ENCODE measurements at regions of chr18 and their contacts with region 1.

Region 1: DNA sequence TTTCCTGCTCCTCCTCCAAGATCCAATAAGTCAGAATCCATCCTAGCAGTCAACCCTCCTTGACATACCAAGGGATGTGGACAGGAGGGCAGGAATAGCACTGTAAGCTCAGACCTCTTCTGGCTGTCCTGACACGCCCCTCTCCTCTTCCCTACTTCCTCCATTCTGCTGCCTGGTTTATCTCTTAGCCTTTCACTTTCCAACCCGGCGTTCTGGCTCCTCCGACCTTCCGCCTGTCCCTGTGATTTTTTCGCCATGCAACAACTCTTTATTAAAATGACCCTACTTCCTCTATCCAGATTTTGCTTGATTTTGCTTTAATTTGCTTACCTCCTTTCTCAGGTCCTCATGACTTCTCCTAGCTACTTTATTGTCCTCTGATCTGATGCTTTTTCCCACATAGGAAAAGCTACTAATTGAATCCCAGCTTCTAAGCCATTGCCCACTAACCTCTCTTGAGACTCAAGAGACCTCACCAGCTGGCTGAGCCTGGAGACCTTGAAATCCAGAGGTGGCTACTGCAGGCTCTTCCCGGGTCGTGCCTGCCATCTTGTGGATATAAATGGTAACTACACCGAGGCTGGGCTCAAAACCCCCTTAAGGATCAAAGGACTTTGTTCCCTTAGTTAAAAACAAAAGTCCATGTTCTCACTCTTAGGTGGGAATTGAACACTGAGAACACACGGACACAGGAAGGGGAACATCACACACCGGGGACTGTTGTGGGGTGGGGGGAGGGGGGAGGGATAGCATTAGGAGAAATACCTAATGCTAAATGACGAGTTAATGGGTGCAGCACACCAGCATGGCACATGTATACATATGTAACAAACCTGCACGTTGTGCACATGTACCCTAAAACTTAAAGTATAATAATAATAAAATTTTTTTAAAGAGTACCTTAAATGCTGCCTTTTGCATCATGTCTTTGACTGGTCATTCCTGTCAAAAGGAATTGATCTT is 139.4 kb downstream of the AKAIN1 start:
- DNase-seq: peak; percentile 64
- ATAC-seq: peak; percentile 73
- H3K4me3 ChIP-seq: no peak overlapping the region
- H3K27ac ChIP-seq: no peak overlapping the region
- H3K4me1 ChIP-seq: no peaks in the 10 kb centered on the region
- H3K27me3 ChIP-seq: peaks cover 9% of the 10 kb centered on the region
- CTCF ChIP-seq: peak; percentile 81

Region 2: DNA sequence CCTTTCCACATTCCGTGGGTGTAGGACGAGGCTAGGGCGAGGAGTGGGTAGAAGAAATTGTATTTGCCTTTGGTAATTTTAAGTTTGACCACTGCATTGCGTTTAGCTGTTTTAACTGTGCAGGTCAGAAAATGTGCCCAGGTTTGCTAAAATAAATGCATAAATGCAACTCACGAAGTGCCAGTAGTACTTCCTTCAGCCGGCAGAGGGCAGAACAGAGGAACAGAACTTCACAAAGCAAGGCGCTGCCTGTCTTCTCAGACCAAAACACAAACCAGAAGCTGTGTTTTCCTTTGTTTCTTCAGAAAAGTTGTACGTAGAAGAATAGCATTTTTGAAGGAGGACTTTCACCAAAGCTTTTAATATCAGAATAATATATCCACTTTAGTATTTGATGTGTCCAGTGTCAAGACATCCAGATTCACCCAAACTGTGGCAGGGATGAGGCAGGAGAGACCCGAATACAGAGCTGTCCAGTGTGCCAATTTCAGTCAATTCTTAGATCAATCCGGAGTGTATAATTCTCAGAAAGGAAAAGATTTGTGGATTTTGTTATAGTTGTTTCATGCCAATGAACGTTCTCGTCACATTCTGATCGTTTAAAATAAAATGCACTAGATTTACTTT is 951.1 kb before region 1 on chr18:
- CTCF ChIA-PET with region 1: no interaction called
- POLR2A ChIA-PET with region 1: no interaction called
- intact Hi-C with region 1: loop called (anchors 1 kb)
- DNase-seq: peak; percentile 78
- ATAC-seq: no peak
- H3K4me3 ChIP-seq: no peak overlapping the region
- H3K27ac ChIP-seq: no peak overlapping the region
- H3K4me1 ChIP-seq: no peaks in the 10 kb centered on the region
- H3K27me3 ChIP-seq: no peaks in the 10 kb centered on the region
- CTCF ChIP-seq: peak; percentile 85

Measured in PC-3 (cell line).